ENCODE measurements at regions of chr12 and their contacts with region 1.

Region 1: DNA sequence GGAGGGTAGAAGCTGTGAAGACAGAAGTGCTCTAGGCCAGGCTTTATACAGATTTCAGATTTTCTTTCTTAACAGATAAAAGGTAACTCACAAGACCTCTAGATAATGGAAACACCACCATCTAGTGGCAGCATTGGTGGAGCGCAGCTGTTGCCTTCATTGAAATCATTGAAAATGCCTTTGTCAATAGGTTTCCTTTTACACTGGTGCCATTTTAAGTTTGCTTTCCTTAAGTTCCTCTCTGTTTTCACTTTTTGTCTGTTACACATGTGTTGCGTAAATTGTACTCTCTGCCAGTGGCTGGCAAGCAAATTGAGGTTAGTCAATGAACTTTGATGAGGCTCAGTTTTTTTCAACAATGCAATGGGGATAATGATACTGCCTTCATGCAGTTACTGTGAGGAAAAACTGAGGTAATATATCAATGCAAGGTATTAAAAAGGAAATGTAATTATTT is 31.1 kb downstream of the ALDH1L2 start:
- H3K4me3 Mint-ChIP-seq: no peak overlapping the region
- H3K27ac Mint-ChIP-seq: no peak overlapping the region
- H3K4me1 Mint-ChIP-seq: peaks cover 6% of the 10 kb centered on the region
- H3K27me3 Mint-ChIP-seq: no peaks in the 10 kb centered on the region

Region 2: DNA sequence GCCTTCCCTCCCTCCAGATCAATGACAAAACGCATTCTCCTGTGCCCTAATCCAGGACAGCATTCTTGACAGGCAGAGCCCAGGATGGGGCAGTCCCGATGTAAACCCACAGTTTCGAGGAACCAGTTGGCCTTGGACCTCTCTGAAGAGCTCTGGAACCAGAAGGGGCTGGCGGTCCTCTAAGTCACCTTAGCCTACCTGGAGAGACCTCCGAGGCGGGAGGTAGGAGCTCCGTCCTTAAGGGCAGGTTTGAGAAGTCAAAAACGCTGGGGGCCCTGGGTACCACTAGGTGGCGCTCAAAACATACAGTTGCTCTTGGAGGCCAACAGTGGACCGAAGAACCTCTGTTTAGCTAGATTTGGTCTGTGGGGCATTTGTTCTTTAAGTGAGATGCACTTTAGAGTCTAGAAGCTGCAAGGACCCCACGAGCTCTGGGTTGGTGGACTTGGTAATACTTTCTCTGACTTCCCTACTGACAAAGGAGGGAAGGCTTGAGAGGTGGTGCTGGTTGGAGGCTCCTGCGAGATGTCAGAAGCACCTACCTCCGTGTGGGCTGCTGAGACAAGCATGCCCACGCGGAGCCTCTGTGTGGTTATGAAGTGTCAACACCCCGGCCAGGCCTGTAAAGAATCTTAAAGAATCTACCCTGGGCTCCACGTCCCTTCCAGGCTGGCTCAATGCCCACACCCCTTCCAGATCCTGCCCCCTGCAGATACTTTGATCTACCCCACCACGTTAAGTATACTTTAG is 671.2 kb before region 1 on chr12:
- intact Hi-C with region 1: loop called (anchors 2 kb)
- H3K4me3 Mint-ChIP-seq: no peak overlapping the region
- H3K27ac Mint-ChIP-seq: peak overlapping the region; percentile 44
- H3K4me1 Mint-ChIP-seq: peaks cover 11% of the 10 kb centered on the region
- H3K27me3 Mint-ChIP-seq: peaks cover 6% of the 10 kb centered on the region

Region 3: DNA sequence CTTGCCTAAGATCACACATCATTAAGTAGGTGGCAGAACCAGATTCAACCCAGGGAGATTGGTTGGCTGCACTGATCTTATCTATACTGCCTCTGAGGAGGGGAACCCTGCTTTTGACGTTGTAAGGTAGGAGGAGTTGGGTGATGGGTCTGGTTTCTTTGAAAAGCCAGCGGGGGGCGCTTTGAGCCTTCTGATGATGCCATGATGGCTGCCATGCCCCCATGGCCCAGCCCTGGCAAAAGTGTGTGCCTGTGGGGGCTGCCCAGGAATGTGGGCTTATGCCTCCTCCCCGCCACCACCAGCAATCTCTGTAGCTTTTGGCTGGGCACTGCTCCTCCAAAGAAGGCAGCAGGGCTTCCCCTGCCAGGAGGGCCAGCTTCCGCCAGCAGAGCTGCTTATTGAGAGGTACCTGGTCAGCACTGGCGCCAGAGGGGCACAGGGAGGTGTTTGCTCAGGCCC is 319.4 kb before region 1 on chr12:
- intact Hi-C with region 1: loop called (anchors 5 kb)
- H3K4me3 Mint-ChIP-seq: no peak overlapping the region
- H3K27ac Mint-ChIP-seq: no peak overlapping the region
- H3K4me1 Mint-ChIP-seq: peaks cover 69% of the 10 kb centered on the region
- H3K27me3 Mint-ChIP-seq: no peaks in the 10 kb centered on the region

Region 4: DNA sequence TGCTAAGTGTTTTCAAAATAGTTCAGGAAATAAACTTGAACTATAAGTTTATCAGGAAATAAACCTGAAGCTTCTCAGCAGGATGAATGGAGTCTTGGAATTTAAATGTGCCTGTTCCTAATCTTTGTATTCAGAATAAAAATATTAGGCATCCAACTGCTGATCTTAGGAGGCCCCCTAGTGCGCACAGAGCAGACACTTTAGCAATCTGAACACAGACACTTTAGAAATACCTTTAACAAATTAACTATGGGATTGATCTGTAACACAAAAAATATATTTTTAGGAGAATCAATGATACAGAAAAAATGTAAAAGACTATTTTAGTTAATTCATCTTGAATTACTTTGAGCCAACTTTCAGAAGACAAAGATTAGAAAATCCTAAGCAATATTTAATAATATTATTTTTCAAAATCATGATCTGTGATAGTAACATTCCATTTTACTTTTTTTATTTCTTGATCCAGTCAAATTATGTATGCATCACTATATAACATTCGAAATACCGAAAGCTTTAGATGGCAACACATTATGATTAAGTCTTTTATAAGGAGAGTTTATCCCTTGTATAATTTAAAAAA is 175.9 kb before region 1 on chr12:
- intact Hi-C with region 1: loop called (anchors 10 kb)
- H3K4me3 Mint-ChIP-seq: no peak overlapping the region
- H3K27ac Mint-ChIP-seq: no peak overlapping the region
- H3K4me1 Mint-ChIP-seq: peaks cover 6% of the 10 kb centered on the region
- H3K27me3 Mint-ChIP-seq: no peaks in the 10 kb centered on the region

Region 5: DNA sequence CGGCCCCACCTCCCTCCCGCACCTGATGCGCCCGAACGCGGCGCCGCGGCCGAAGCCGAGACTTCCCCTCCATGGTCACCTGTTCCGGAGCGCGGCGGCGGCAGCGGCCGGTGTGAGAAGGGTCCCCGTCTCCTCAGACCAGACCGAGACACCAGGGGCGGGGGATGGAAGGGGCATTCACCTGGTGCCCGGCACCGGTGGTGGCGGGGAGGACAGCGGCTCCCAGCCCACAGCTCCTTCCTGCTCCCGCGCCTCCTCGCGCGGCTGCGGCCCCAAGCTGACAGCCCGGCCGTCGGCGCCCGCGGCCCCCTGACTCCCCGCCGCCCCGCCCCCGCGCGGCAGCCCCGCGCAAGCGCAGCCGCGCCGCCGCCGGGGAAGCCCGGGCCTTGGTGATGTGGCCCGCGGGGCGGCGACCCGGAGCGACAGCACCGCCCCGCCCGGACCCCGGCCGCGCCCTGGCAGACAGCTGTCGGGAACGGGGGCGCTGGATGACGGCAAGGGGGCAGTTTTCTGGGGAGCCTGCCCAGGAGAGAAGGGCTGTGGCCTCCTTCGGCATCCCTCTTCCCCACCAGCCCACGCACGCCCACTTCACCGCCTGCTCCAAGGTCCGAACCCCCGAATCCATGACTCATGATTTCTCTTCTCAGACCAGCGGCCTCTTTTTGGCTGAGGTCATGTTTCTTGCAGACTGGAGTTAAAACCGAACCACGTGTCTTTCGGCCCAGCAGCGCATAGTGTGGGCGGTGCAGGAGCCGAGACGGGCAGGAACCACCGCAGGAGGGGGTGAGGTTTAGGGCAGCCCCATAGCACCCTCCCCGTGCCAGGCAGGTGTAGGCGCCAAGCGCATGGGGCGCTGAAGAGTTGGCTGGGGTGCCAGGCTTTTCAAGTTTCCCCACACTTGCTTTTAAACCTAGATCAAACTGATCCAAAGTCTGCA is 94.9 kb before region 1 on chr12 and contains the start of gene SLC41A2:
- intact Hi-C with region 1: loop called (anchors 10 kb)
- H3K4me3 Mint-ChIP-seq: peak within 1 kb of the TSS; percentile 85
- H3K27ac Mint-ChIP-seq: peak within 1 kb of the TSS; percentile 96
- H3K4me1 Mint-ChIP-seq: peaks cover 33% of the 10 kb centered on the region
- H3K27me3 Mint-ChIP-seq: peaks cover 8% of the 10 kb centered on the region

Region 6: GRCh38 chr12:105013892-105014291 is 39.3 kb before region 1 on chr12:
- intact Hi-C with region 1: no loop called
- H3K4me3 Mint-ChIP-seq: no peak overlapping the region
- H3K27ac Mint-ChIP-seq: no peak overlapping the region
- H3K4me1 Mint-ChIP-seq: peaks cover 5% of the 10 kb centered on the region
- H3K27me3 Mint-ChIP-seq: no peaks in the 10 kb centered on the region